ENCODE measurements at regions of chr17 and their contacts with region 1.

Region 1: DNA sequence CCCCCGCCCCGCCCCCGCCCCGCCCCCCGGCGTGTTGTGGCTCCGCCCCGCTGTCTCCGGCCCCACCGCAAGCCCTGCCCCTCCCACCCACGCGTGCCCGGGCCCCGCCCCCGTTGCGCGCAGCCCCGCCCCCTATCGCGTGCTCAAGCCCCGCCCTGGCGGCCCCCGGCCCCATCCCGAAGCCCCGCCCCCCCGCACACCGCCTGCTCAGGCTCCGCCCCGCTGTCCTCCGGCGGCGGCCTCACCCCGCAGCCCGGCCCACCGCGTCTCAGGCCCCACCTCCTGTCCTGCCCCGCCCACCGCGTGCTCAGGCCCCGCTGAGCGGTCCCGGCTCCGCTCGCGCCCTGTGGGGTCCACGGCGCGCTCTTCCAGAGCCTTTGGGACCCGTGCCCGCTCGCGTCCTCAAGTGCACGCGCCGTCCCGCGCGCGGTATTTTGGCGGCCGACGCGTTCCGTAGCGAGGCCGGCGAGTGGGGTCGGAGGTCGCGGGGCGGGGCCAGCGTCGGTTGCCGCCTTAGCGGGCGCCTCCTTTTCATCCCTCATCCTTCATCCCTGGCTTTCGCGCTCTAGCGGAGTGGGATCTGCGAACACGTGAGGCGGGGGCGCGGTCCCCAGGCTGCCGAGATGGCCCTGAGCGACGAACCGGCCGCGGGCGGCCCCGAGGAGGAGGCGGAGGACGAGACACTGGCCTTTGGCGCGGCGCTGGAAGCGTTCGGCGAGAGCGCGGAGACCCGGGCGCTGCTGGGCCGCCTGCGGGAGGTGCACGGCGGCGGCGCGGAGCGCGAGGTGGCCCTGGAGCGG is at the start of gene TBCD:
- DNase-seq: peak; percentile 85 to 89
- H3K4me3 ChIP-seq: peak within 1 kb of the TSS; percentile 93
- H3K4me3 Mint-ChIP-seq: peak within 1 kb of the TSS; percentile 98
- H3K27ac Mint-ChIP-seq: peak within 1 kb of the TSS; percentile 67
- H3K4me1 ChIP-seq: peaks cover 14% of the 10 kb centered on the region
- H3K4me1 Mint-ChIP-seq: peaks cover 18% of the 10 kb centered on the region
- H3K27me3 ChIP-seq: no peaks in the 10 kb centered on the region
- H3K27me3 Mint-ChIP-seq: no peaks in the 10 kb centered on the region
- CTCF ChIP-seq: no peak
- total RNA-seq, gene TBCD: 94.6 and 108 TPM in 2 replicates

Region 2: GRCh38 chr17:82734987-82735866 is 16.5 kb before region 1 on chr17 and contains the start of gene FN3K:
- CTCF ChIA-PET with region 1: no interaction called
- POLR2A ChIA-PET with region 1: no interaction called
- intact Hi-C with region 1: loop called (anchors 2 kb)
- DNase-seq: peak; percentile 86 to 89
- H3K4me3 ChIP-seq: peak within 1 kb of the TSS; percentile 90
- H3K4me3 Mint-ChIP-seq: peak within 1 kb of the TSS; percentile 90
- H3K27ac Mint-ChIP-seq: peak within 1 kb of the TSS; percentile 93
- H3K4me1 ChIP-seq: no peaks in the 10 kb centered on the region
- H3K4me1 Mint-ChIP-seq: no peaks in the 10 kb centered on the region
- H3K27me3 ChIP-seq: no peaks in the 10 kb centered on the region
- H3K27me3 Mint-ChIP-seq: no peaks in the 10 kb centered on the region
- CTCF ChIP-seq: no peak
- total RNA-seq, gene FN3K: 55.7 and 60.0 TPM in 2 replicates

Region 3: DNA sequence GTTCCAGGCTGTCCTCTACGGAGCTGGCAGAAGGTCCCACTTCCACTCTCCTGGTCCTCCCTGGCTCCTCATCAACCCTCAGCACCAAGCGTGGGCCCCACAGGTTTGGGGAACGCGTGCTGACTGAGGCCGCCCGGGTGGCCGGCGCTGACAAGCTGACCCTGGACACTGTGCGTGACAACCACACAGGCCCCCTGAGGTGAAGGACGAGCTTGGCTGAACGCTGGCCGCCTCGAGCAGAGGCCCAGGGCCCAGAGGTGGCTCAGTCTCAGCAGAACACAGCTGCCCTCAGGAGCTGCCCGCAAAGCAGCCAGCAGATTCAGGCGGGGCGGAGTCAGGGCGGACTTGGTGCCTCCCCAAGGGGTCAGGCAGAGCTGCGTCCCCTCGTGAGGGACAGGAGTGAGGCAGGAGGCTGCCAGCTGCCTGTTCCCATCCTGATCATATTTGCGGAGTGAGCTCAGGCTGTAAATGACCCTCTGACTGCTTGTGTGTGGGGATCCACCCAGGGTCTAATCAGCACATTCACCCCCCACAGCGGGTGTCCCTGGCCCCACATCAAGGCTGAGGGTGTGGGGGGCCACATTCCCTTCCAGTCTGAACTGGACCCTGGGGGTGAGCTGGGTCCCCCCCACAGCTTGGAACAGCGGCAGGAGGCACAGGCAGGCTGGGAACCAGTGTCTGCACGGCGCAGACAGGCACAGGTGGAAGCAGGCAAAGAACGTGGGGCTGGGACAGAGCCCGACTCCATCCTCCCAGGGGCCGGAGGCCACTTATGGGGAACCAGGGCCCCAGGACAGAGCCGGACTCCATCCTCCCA is 222.6 kb after region 1 on chr17:
- CTCF ChIA-PET with region 1: no interaction called
- POLR2A ChIA-PET with region 1: no interaction called
- intact Hi-C with region 1: no loop called
- DNase-seq: no peak
- H3K4me3 ChIP-seq: no peak overlapping the region
- H3K4me3 Mint-ChIP-seq: no peak overlapping the region
- H3K27ac Mint-ChIP-seq: no peak overlapping the region
- H3K4me1 ChIP-seq: no peaks in the 10 kb centered on the region
- H3K4me1 Mint-ChIP-seq: no peaks in the 10 kb centered on the region
- H3K27me3 ChIP-seq: no peaks in the 10 kb centered on the region
- H3K27me3 Mint-ChIP-seq: no peaks in the 10 kb centered on the region
- CTCF ChIP-seq: no peak

Region 4: GRCh38 chr17:83064732-83065659 is 313.2 kb after region 1 on chr17:
- CTCF ChIA-PET with region 1: no interaction called
- POLR2A ChIA-PET with region 1: no interaction called
- intact Hi-C with region 1: no loop called
- DNase-seq: peak in 1 of 2 experiments; percentile 48
- H3K4me3 ChIP-seq: no peak overlapping the region
- H3K4me3 Mint-ChIP-seq: no peak overlapping the region
- H3K27ac Mint-ChIP-seq: peak overlapping the region; percentile 31
- H3K4me1 ChIP-seq: peaks cover 6% of the 10 kb centered on the region; the same call in 1 of the 2 replicates
- H3K4me1 Mint-ChIP-seq: no peaks in the 10 kb centered on the region
- H3K27me3 ChIP-seq: no peaks in the 10 kb centered on the region; the same call in 1 of the 2 replicates
- H3K27me3 Mint-ChIP-seq: peaks cover 3% of the 10 kb centered on the region
- CTCF ChIP-seq: no peak